ENCODE measurements at regions of chr5 and their contacts with region 1.

Region 1: GRCh38 chr5:110738812-110739651 is at the start of gene SLC25A46:
- DNase-seq: peak; percentile 93
- ATAC-seq: peak; percentile 88
- H3K4me3 Mint-ChIP-seq: peak within 1 kb of the TSS; percentile 88
- H3K27ac Mint-ChIP-seq: peak within 1 kb of the TSS; percentile 95
- H3K4me1 Mint-ChIP-seq: peaks cover 38% of the 10 kb centered on the region
- H3K27me3 Mint-ChIP-seq: peaks cover 11% of the 10 kb centered on the region
- total RNA-seq, gene SLC25A46: 47.7 to 61.2 TPM

Region 2: DNA sequence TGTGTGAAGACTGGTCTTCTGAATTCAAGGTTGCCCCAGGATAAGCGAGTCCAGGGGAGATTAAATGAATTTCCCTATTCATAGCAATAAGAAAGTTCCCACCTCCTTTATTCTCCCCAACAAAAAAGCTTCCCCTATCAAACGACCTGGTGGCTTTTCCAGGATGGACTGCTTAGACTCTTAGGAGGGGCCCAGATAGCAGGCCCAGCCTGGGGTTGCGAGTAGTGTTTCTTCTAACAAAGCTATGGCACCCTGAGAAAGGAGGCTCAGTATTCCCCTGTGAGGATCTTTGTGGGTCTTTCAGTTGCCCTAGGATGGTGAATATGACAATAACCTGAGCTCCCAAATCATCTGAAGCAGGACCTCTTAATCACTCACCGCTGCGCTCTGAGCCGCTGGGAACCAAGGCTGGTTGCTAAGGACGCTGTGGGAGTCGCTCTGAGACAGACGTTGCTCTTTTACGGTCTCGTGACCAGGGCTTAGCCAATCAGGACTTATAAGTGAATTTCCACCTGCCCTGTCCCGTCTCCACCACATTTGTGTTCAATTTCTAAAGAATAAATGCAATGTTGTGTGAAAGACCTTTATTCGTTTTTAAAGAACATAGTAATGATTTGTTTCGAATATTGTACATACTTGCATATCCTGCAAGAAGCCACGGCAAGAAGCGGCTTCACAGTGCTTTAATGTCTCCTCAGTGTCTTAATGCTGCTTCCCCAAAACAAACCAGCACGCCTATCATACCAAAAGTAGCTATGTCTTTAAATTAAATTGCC is 12.6 kb before region 1 on chr5 and contains the start of gene TMEM232:
- CTCF ChIA-PET with region 1: interaction called, 16 read pairs
- DNase-seq: peak; percentile 86
- ATAC-seq: peak; percentile 100
- H3K4me3 Mint-ChIP-seq: peak within 1 kb of the TSS; percentile 78
- H3K27ac Mint-ChIP-seq: peak within 1 kb of the TSS; percentile 53
- H3K4me1 Mint-ChIP-seq: peaks cover 6% of the 10 kb centered on the region
- H3K27me3 Mint-ChIP-seq: no peaks in the 10 kb centered on the region
- total RNA-seq, gene TMEM232: 0.28 to 0.76 TPM

Region 3: DNA sequence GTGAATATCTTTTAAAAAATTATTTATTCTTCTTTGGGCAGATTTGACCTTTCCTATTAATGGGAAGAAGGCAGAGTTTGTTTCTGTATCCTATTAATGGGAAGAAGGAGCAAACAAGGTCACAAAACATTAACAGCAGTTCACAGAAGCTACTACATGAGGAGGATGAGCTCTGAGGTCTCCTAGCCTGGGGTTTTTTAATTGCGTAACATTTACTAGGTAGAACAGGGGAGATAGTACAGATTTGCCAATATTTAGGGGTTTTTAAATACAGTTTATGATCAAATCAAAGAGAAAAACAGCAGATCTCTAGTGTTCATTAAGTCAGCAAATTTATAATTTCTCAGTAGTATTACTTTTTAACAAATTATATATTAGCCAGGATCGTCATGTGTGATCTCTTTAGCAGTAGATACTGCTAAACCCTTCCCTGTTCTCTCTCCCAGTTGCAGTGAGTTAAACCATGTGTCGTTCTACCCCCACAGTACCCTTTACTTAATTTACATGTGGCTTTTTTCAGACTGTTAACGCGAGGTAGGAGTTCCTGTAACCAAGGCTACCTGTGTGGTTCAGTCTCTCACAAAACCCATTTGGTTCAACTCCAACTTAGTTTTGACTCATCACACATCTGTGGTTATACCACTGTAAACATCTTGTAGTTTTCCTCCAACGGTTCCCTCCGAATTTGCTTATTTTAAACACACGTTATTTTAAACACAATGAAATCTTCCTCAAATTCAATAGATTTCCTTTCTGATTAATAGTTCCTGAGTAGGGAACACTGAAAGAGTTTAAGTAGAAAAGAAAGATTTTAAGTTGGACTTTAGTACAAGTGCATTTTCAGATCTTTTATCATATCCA is 13.1 kb after region 1 on chr5:
- CTCF ChIA-PET with region 1: interaction called, 12 read pairs
- DNase-seq: peak; percentile 74
- ATAC-seq: peak; percentile 89
- H3K4me3 Mint-ChIP-seq: peak overlapping the region; percentile 22
- H3K27ac Mint-ChIP-seq: peak overlapping the region; percentile 94
- H3K4me1 Mint-ChIP-seq: peaks cover 52% of the 10 kb centered on the region
- H3K27me3 Mint-ChIP-seq: no peaks in the 10 kb centered on the region

Region 4: GRCh38 chr5:110757118-110757729 is 18.2 kb after region 1 on chr5:
- CTCF ChIA-PET with region 1: interaction called, 10 read pairs
- DNase-seq: no peak
- ATAC-seq: no peak
- H3K4me3 Mint-ChIP-seq: no peak overlapping the region
- H3K27ac Mint-ChIP-seq: no peak overlapping the region
- H3K4me1 Mint-ChIP-seq: peaks cover 29% of the 10 kb centered on the region
- H3K27me3 Mint-ChIP-seq: no peaks in the 10 kb centered on the region